ENCODE measurements at regions of chr19 and their contacts with region 1.

Region 1: DNA sequence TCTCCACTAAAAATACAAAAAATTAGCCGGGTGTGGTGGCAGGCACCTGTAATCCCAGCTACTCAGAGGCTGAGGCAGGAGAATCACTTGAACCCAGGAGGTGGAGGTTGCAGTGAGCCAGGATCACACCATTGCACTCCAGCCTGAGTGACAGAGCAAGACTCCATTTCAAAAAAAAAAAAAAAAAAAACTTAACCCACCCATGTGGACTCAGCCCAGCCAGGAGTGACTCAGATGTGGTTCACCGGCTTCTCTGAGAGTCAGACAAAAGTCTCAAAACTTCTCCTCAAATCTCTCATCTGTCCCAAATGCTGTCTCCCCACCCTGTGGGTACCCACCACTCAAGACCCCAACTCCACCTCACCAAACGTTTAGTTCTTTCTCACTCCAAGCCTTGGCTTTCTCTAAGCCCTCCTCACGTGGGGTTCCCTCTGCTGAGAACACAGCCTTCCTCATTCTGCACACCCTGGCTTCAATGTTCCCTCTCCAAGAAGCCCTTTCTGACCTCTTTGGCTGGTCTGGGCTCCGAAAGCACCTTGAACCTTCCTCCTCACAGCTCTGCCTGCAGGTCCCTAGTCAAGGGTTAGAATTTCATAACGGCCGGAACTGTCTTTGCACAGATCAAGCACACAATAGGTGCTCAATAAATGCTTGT is 11.1 kb upstream of the RAB3A start:
- DNase-seq: no peak
- ATAC-seq: no peak
- H3K4me3 ChIP-seq: no peak overlapping the region
- H3K27ac ChIP-seq: no peak overlapping the region
- H3K4me1 ChIP-seq: no peaks in the 10 kb centered on the region
- H3K27me3 ChIP-seq: no peaks in the 10 kb centered on the region
- CTCF ChIP-seq: no peak

Region 2: GRCh38 chr19:18091217-18091608 is 123.7 kb before region 1 on chr19:
- CTCF ChIA-PET with region 1: interaction called, 10 read pairs
- POLR2A ChIA-PET with region 1: no interaction called
- in situ Hi-C with region 1: no loop called
- intact Hi-C with region 1: no loop called
- DNase-seq: no peak
- ATAC-seq: no peak
- H3K4me3 ChIP-seq: no peak overlapping the region
- H3K27ac ChIP-seq: no peak overlapping the region
- H3K4me1 ChIP-seq: no peaks in the 10 kb centered on the region
- H3K27me3 ChIP-seq: no peaks in the 10 kb centered on the region
- CTCF ChIP-seq: no peak

Measured in Panc1 (cell line).